B cell (primary cell): ENCODE measurements at regions of chr3 and their contacts with region 1.

Region 1: GRCh38 chr3:58008140-58009025 is at the start of gene FLNB:
- DNase-seq: peak; percentile 86
- ATAC-seq: peak; percentile 92
- H3K4me3 ChIP-seq: peak within 1 kb of the TSS; percentile 88 to 97 (median 95)
- H3K4me3 Mint-ChIP-seq: peak within 1 kb of the TSS; percentile 94
- H3K27ac ChIP-seq: peak within 1 kb of the TSS; percentile 50 to 60
- H3K27ac Mint-ChIP-seq: peak within 1 kb of the TSS; percentile 85
- H3K4me1 ChIP-seq: peaks cover 14% of the 10 kb centered on the region in 2 donors
- H3K4me1 Mint-ChIP-seq: peaks cover 22% of the 10 kb centered on the region
- H3K27me3 ChIP-seq: no peaks in the 10 kb centered on the region
- H3K27me3 Mint-ChIP-seq: no peaks in the 10 kb centered on the region
- CTCF ChIP-seq: peak; percentile 72
- total RNA-seq, gene FLNB: 28.2 and 28.3 TPM in 2 replicates

Region 2: GRCh38 chr3:57169872-57170623 is 838.3 kb before region 1 on chr3:
- CTCF ChIA-PET with region 1: no interaction called
- POLR2A ChIA-PET with region 1: no interaction called
- intact Hi-C with region 1: loop called (anchors 10 kb)
- DNase-seq: peak; percentile 86
- ATAC-seq: peak; percentile 67
- H3K4me3 ChIP-seq: peak overlapping the region; percentile 16 to 67 (median 51)
- H3K4me3 Mint-ChIP-seq: peak overlapping the region; percentile 46
- H3K27ac ChIP-seq: peak overlapping the region in 1 of 2 donors; percentile 5
- H3K27ac Mint-ChIP-seq: no peak overlapping the region
- H3K4me1 ChIP-seq: peaks cover 13 to 16% of the 10 kb centered on the region in 2 donors
- H3K4me1 Mint-ChIP-seq: peaks cover 11% of the 10 kb centered on the region
- H3K27me3 ChIP-seq: peaks cover 0 to 33% (median 17%) of the 10 kb centered on the region in 4 experiments
- H3K27me3 Mint-ChIP-seq: peaks cover 37% of the 10 kb centered on the region
- CTCF ChIP-seq: peak; percentile 96

Region 3: DNA sequence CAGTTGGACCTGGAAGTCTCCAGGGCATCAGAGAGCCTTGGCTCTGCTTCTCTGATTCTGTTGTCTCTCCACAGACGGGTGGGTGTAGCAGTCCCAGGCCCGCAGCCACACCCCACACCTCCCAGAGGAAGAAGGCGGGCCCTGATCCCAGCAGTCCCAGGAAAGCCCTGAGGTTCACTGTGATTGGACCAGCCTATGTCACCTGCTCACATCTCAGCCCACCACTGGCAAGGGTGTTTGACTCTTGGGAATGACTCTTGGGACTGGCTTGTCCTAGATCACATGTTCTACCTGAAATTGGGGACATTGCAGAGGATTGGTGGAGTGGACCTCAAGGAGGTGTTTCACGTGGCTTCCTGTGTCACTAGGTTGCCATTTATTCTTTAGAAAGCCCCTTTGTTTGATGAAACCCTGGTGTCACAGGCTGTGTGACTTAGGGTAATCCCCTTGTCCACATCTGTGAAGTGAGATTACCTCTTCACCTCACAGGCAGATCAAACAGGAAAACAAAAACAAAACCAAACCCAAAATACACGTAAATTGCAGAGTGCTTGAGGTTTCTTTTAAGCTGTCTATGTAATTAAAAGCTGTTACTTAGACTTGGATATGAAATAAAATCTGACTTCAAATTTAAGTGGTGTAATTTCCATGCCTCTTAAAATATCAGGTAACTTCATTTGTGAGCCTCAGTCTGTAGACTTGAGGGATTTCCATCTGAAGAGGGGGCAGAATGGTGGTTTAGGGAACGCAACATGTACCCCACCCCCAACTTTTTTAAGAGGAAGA is 26.5 kb after region 1 on chr3:
- CTCF ChIA-PET with region 1: interaction called, 3 read pairs
- POLR2A ChIA-PET with region 1: no interaction called
- intact Hi-C with region 1: loop called (anchors 2 kb)
- DNase-seq: peak; percentile 82
- ATAC-seq: peak; percentile 94
- H3K4me3 ChIP-seq: peak overlapping the region in 1 of 5 experiments; percentile 40
- H3K4me3 Mint-ChIP-seq: peak overlapping the region; percentile 38
- H3K27ac ChIP-seq: peak overlapping the region; percentile 80 to 88
- H3K27ac Mint-ChIP-seq: peak overlapping the region; percentile 85
- H3K4me1 ChIP-seq: peaks cover 28 to 29% of the 10 kb centered on the region in 2 donors
- H3K4me1 Mint-ChIP-seq: peaks cover 42% of the 10 kb centered on the region
- H3K27me3 ChIP-seq: no peaks in the 10 kb centered on the region
- H3K27me3 Mint-ChIP-seq: no peaks in the 10 kb centered on the region
- CTCF ChIP-seq: no peak

Region 4: DNA sequence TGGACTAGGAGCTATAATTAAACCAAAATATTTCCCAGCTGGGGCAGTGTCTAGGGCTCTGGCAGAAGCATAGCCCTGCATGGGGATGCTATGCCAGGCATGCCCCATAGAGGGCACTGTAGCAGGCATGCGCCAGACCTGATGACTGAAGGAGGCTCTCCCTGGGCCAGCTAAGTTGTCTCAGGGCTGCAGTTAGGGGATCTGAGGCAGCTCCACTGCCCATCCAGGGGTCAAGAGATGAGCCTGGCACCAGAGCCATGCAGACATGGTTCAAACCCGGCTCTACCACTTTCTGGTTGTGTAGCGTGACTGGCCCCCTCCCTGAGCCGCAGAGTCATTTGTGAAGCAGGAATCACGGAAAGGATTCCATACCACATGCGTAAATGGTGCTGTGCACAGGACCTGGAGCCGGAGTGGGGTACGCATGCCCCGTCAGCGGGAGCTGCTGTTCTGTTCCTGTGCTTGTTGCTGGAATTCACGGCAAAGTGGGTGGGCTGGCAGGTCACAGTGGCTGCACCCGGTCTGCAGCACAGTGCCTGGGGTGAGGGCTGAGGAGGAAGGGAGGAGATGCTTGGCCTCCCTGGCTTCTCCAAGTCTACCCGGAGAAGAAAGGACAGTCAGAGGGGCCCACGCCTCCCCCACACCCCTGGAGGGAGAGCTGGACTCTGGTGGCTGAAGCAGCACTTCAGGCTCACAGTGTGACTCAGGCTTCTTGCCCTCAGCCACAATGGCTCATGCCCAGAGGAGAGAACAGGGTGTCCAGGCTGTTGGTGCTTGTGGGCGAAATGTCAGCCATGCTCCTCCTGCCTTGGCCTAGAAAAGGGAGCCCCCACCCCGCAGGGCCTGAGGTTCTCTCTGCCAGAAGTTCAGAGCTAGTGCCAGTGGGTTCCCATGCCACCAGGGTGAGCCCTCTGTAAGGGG is 159.3 kb after region 1 on chr3:
- CTCF ChIA-PET with region 1: interaction called, 21 read pairs
- POLR2A ChIA-PET with region 1: interaction called, 6 read pairs
- intact Hi-C with region 1: loop called (anchors 2 kb)
- DNase-seq: peak; percentile 57
- ATAC-seq: peak; percentile 67
- H3K4me3 ChIP-seq: no peak overlapping the region
- H3K4me3 Mint-ChIP-seq: no peak overlapping the region
- H3K27ac ChIP-seq: no peak overlapping the region
- H3K27ac Mint-ChIP-seq: no peak overlapping the region
- H3K4me1 ChIP-seq: no peaks in the 10 kb centered on the region
- H3K4me1 Mint-ChIP-seq: no peaks in the 10 kb centered on the region
- H3K27me3 ChIP-seq: no peaks in the 10 kb centered on the region
- H3K27me3 Mint-ChIP-seq: no peaks in the 10 kb centered on the region
- CTCF ChIP-seq: peak; percentile 79

Region 5: DNA sequence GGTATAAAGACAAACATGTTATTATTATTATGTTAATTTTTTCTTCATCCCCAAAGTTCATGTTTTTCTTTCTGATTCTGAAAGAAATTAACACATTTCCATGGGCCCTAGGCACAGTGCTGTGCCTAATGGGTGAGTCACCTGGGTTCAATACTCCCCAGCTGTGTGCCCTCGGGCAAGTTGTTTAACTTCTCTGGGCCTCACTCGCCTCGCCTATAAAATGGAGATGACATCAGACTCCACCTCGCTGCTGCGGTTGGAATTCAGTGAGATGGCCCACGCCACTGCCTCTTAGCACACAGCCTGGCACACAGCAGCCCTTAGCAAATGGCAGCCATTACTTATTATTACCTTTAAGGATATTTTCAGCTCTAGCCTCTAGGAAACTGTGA is 179.8 kb after region 1 on chr3:
- CTCF ChIA-PET with region 1: interaction called, 10 read pairs
- POLR2A ChIA-PET with region 1: no interaction called
- intact Hi-C with region 1: no loop called
- DNase-seq: no peak
- ATAC-seq: no peak
- H3K4me3 ChIP-seq: no peak overlapping the region
- H3K4me3 Mint-ChIP-seq: no peak overlapping the region
- H3K27ac ChIP-seq: no peak overlapping the region
- H3K27ac Mint-ChIP-seq: no peak overlapping the region
- H3K4me1 ChIP-seq: peaks cover 0 to 5% of the 10 kb centered on the region in 2 donors
- H3K4me1 Mint-ChIP-seq: peaks cover 3% of the 10 kb centered on the region
- H3K27me3 ChIP-seq: no peaks in the 10 kb centered on the region
- H3K27me3 Mint-ChIP-seq: no peaks in the 10 kb centered on the region
- CTCF ChIP-seq: no peak

Region 6: DNA sequence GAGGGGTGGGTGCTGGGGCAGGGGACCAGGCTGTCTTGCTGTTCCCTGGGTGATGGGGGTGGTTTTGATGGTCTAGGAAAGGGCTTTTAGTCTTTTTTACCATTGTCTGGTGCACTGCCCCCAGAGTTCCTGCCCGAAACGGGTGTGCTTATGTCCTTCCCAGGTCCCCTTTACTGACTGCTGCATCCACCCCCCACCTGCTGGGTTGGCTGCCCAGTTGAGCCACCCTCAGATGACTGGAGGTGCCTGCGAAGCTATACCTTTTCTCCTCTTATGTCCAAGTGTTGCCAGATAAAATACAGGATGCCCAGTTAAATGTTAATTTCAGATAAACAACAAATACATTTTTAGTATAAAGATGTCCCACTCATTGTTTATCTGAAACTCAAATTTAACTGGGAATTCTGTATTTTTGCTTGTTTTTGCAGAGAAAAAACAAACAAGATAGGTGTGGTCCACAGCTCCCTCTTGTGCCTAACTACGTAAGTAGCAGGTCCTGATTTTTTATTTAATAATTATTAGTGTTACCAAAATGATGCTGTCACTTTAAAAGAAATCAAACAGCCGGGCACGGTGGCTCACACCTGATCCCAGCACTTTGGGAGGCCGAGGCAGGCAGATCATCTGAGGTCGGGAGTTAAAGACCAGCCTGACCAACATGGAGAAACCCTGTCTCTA is 291.6 kb after region 1 on chr3:
- CTCF ChIA-PET with region 1: interaction called, 5 read pairs
- POLR2A ChIA-PET with region 1: no interaction called
- intact Hi-C with region 1: loop called (anchors 1 kb)
- DNase-seq: peak; percentile 50
- ATAC-seq: no peak
- H3K4me3 ChIP-seq: no peak overlapping the region
- H3K4me3 Mint-ChIP-seq: no peak overlapping the region
- H3K27ac ChIP-seq: no peak overlapping the region
- H3K27ac Mint-ChIP-seq: no peak overlapping the region
- H3K4me1 ChIP-seq: no peaks in the 10 kb centered on the region
- H3K4me1 Mint-ChIP-seq: no peaks in the 10 kb centered on the region
- H3K27me3 ChIP-seq: no peaks in the 10 kb centered on the region
- H3K27me3 Mint-ChIP-seq: no peaks in the 10 kb centered on the region
- CTCF ChIP-seq: peak; percentile 65